ENCODE measurements at regions of chr6 and their contacts with region 1.

Region 1: DNA sequence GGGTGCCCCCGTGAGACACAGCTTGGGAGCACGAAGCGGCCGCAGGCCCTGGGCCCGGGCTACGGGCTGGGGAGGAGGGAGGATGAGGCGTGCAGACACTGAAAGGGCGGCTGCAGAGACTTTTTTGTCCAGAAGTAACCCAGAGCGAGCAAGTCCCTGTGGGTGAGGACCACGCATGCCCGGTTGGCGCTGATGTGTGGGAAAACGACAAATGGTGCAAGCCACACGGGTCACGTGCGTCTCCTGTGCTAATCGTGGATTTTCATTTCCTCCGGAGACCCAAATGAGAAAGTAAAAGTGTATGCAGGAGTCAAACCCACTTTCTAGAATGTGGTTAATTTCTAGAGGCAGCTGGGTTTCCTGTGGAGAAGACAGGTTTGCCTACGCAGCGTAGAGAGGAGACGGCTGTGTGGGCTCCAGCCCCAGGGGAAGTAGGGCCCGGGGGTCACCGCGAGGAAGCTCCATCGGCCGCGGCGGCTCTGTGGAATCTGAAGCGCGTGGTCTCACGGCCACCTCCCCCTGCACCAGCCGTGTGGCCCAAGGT is 19.0 kb downstream of the DLL1 start:
- DNase-seq: peak; percentile 51
- H3K4me3 Mint-ChIP-seq: peak overlapping the region; percentile 37
- H3K27ac Mint-ChIP-seq: no peak overlapping the region
- H3K4me1 Mint-ChIP-seq: peaks cover 9% of the 10 kb centered on the region
- H3K27me3 Mint-ChIP-seq: peaks cover 50% of the 10 kb centered on the region

Region 2: GRCh38 chr6:168377484-168377855 is 1894.4 kb before region 1 on chr6:
- intact Hi-C with region 1: no loop called
- DNase-seq: no peak
- H3K4me3 Mint-ChIP-seq: no peak overlapping the region
- H3K27ac Mint-ChIP-seq: no peak overlapping the region
- H3K4me1 Mint-ChIP-seq: no peaks in the 10 kb centered on the region
- H3K27me3 Mint-ChIP-seq: no peaks in the 10 kb centered on the region

Region 3: DNA sequence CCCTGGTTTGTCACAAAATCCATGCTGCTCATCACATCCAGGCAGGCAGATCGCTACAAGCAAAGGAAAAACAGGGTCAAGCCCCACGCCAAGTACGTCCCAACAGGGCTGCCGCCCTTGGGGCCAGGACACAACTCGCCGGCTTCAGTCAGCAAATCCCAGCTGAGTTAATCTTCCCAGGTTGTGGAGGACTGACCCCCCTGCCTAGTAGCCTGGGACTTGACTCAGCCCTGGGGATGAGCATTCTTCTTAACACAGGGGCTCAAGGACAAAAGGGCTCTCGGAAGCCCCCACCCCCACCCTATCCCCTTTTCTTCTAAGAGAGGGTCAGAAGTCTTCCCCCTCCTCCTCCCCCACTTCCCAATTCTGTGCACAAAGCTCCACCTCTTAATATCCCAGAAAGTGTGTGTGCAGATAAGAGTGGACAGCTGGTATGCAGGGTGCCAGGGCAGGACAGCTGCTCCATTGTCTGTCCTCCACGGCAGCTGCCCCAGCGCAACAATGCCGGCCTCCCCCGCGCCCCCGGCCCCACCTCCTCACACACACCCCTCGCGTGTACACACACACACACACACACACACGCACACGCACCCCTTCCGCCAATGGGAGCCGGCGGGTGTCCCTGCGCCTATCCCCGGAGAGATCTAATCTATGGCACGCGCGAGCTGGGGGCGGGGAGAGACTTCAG is 14.5 kb after region 1 on chr6:
- intact Hi-C with region 1: loop called (anchors 2 kb)
- DNase-seq: no peak
- H3K4me3 Mint-ChIP-seq: no peak overlapping the region
- H3K27ac Mint-ChIP-seq: no peak overlapping the region
- H3K4me1 Mint-ChIP-seq: peaks cover 15% of the 10 kb centered on the region
- H3K27me3 Mint-ChIP-seq: peaks cover 55% of the 10 kb centered on the region